ENCODE measurements at regions of chr12 and their contacts with region 1.

Region 1: DNA sequence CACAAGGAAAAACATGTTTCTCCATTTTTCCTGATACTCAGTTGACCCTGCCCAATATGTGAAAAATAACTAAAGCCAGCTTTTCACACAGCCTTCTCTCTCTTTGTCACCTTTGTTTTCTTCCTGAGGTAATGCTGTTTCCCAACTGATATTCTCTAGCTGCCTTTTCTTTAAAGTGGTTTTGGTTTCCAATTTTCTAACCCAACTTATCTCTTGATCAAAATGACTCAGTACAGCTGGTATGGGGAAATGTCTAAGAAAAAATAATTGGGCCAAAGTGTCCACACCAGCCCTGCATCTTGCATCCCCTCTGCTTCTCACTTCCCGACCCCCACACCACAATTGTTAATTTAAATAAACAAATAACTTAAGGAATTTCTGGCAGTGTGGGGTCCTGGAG is 193.8 kb downstream of the SYT1 start:
- DNase-seq: peak; percentile 35 to 70
- H3K4me3 ChIP-seq: no peak overlapping the region
- H3K27ac ChIP-seq: peak overlapping the region; percentile 84
- H3K4me1 ChIP-seq: peaks cover 29% of the 10 kb centered on the region
- H3K27me3 ChIP-seq: no peaks in the 10 kb centered on the region
- CTCF ChIP-seq: no peak

Region 2: GRCh38 chr12:77940011-77940423 is 1118.3 kb before region 1 on chr12:
- CTCF ChIA-PET with region 1: no interaction called
- POLR2A ChIA-PET with region 1: interaction called, 10 read pairs
- intact Hi-C with region 1: no loop called
- DNase-seq: peak; percentile 27 to 74
- H3K4me3 ChIP-seq: no peak overlapping the region
- H3K27ac ChIP-seq: peak overlapping the region; percentile 88
- H3K4me1 ChIP-seq: peaks cover 25% of the 10 kb centered on the region
- H3K27me3 ChIP-seq: no peaks in the 10 kb centered on the region
- CTCF ChIP-seq: no peak

Region 3: DNA sequence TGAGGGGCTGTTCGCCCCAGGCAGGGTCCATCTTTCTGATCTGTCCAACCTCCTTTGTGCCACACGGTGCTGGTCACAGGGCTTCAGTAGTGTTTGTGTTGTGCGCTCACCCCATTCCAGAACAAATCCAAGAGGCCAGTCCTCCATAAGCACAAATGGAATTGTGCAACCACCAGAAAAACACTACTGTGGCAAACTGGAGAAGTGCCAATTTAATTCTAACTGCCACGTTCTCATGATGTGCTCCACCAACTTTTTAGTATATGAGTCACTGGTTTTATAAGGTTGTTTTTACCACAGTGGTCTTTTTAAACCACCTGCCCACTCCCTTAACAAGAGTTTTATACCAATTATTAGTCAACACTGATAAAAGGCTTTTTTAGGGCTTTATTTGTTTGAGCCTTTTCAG is 847.4 kb before region 1 on chr12:
- CTCF ChIA-PET with region 1: no interaction called
- POLR2A ChIA-PET with region 1: no interaction called
- intact Hi-C with region 1: no loop called
- DNase-seq: no peak
- H3K4me3 ChIP-seq: no peak overlapping the region
- H3K27ac ChIP-seq: no peak overlapping the region
- H3K4me1 ChIP-seq: no peaks in the 10 kb centered on the region
- H3K27me3 ChIP-seq: no peaks in the 10 kb centered on the region
- CTCF ChIP-seq: no peak

Region 4: DNA sequence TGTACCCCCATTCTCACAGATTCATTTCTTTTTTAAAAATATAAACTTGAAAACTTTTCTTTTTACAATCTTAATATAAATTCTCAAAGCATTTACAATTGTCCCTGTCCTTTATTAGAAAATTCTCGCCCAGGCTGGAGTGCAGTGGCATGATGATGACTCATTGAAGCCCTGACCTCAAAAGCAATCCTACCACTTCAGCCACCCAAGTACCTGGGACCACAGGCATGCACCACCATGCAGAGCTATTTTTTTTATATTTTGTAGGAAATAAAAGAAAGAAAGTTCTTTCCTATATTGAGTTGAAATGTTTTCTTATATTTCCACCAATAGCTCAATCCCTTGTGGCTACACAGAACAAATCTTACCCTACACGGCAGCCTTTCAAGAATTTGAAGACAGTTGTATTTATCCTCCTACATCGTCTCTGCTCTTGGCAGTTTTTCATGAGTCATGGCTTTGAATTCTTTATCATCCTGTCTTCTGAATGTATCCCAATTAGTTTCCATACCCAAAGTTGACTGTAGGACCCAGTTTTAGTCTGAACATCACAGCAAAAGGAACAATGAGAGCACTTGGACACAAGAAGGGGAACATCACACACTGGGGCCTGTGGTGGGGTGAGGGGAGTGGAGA is 141.4 kb before region 1 on chr12:
- CTCF ChIA-PET with region 1: no interaction called
- POLR2A ChIA-PET with region 1: no interaction called
- intact Hi-C with region 1: loop called (anchors 5 kb)
- DNase-seq: peak; percentile 48 to 61
- H3K4me3 ChIP-seq: no peak overlapping the region
- H3K27ac ChIP-seq: peak overlapping the region; percentile 43
- H3K4me1 ChIP-seq: peaks cover 28% of the 10 kb centered on the region
- H3K27me3 ChIP-seq: no peaks in the 10 kb centered on the region
- CTCF ChIP-seq: no peak

Region 5: GRCh38 chr12:79083181-79083580 is 24.9 kb after region 1 on chr12:
- CTCF ChIA-PET with region 1: no interaction called
- POLR2A ChIA-PET with region 1: interaction called, 11 read pairs
- intact Hi-C with region 1: no loop called
- DNase-seq: no peak
- H3K4me3 ChIP-seq: no peak overlapping the region
- H3K27ac ChIP-seq: no peak overlapping the region
- H3K4me1 ChIP-seq: peaks cover 10% of the 10 kb centered on the region; the same call in 1 of the 2 replicates
- H3K27me3 ChIP-seq: no peaks in the 10 kb centered on the region
- CTCF ChIP-seq: no peak

Measured in PC-9 (cell line).